ENCODE measurements at regions of chr4 and their contacts with region 1.

Region 1: GRCh38 chr4:53702334-53703266 is 111.3 kb upstream of the LNX1 start:
- DNase-seq: peak; percentile 62 to 75
- ATAC-seq: peak; percentile 56 to 68
- H3K4me3 ChIP-seq: peak overlapping the region; percentile 22 to 50 (median 42)
- H3K27ac ChIP-seq: peak overlapping the region; percentile 45 to 71 (median 58)
- H3K4me1 ChIP-seq: peaks cover 12 to 21% of the 10 kb centered on the region in 2 donors
- H3K27me3 ChIP-seq: no peaks in the 10 kb centered on the region
- CTCF ChIP-seq: no peak
- POLR2A ChIP-seq: no peak

Region 2: DNA sequence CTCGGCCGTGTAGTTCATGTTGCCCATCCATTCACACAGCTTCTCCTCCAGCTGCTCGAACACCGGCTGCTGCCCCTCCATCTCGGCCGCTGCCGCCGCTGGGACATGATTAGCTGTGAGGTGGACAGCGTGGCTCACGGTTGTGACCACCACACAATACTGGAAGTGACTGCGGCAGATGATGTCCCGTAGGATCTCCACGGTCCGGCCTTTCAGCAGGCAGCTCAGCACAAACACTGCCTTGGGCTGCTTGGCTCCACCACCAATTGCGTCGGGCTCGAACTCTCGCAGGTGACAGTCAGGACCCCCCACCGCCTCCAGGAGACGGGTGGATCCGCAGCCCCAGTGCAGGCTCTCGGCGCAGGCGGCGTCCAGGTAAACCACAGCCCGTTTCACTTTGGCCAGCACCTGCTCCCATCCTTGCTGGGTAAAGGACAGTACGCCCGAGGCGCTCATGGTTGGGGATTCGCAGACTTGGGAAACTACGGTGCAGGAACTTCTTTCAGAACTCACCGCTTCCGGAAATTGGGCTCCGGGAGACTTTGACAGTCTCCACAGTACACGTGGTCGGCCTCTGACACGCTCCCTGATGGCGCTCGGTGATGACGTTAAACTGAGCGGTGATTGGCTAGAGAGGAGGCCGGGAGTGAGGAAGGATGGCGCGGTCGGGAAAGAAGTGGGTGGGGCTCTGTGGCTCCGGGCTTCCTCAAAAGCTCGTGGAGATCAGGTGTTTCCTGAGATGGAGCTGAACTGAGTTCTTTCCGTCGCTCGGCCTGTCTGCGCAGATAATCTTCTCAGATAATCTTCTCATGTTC is 336.9 kb before region 1 on chr4 and contains the start of gene SCFD2:
- in situ Hi-C with region 1: no loop called
- intact Hi-C with region 1: no loop called
- DNase-seq: peak; percentile 96
- ATAC-seq: peak; percentile 100
- H3K4me3 ChIP-seq: peak within 1 kb of the TSS; percentile 64 to 98 (median 88)
- H3K27ac ChIP-seq: peak within 1 kb of the TSS; percentile 56 to 78 (median 68)
- H3K4me1 ChIP-seq: peaks cover 16 to 23% of the 10 kb centered on the region in 2 donors
- H3K27me3 ChIP-seq: peaks cover 2 to 13% (median 5%) of the 10 kb centered on the region in 3 donors
- CTCF ChIP-seq: no peak
- POLR2A ChIP-seq: peak; percentile 22 to 51
- total RNA-seq, gene SCFD2: 8.9 to 16.0 (median 14.8) TPM

Region 3: GRCh38 chr4:53490965-53491622 is 211.5 kb before region 1 on chr4:
- in situ Hi-C with region 1: no loop called
- intact Hi-C with region 1: loop called (anchors 10 kb)
- DNase-seq: peak in 1 of 2 donors; percentile 48
- ATAC-seq: peak; percentile 68 to 81
- H3K4me3 ChIP-seq: no peak overlapping the region
- H3K27ac ChIP-seq: peak overlapping the region in 1 of 4 donors; percentile 3
- H3K4me1 ChIP-seq: peaks cover 5 to 11% of the 10 kb centered on the region in 2 donors
- H3K27me3 ChIP-seq: no peaks in the 10 kb centered on the region
- CTCF ChIP-seq: peak; percentile 30 to 62 (median 50)
- POLR2A ChIP-seq: no peak

Region 4: DNA sequence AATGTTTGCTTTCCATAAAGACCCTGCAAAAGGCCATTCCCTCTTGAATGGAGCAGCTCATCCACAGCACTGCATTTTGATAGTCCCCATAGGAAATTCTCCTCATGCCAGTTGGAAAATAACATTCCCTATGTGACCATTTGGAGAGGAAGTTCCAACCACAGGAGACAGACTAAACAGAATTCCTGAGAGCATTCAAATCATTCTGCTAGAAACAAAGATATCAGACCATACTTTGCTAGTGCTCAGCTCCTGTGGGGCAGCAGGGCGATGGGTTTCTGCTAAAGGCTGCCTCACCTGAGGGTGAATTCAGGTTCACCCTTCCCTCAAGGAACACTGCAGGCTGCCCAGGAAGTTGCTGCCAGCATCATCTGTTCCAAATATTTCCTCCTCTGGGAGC is 170.1 kb before region 1 on chr4:
- in situ Hi-C with region 1: no loop called
- intact Hi-C with region 1: no loop called
- DNase-seq: no peak
- ATAC-seq: no peak
- H3K4me3 ChIP-seq: no peak overlapping the region
- H3K27ac ChIP-seq: peak overlapping the region in 2 of 4 donors; percentile 2 to 8
- H3K4me1 ChIP-seq: peaks cover 3% of the 10 kb centered on the region in 2 donors
- H3K27me3 ChIP-seq: no peaks in the 10 kb centered on the region
- CTCF ChIP-seq: no peak
- POLR2A ChIP-seq: no peak

Region 5: GRCh38 chr4:53551958-53552357 is 150.6 kb before region 1 on chr4:
- in situ Hi-C with region 1: no loop called
- intact Hi-C with region 1: no loop called
- DNase-seq: no peak
- ATAC-seq: no peak
- H3K4me3 ChIP-seq: no peak overlapping the region
- H3K27ac ChIP-seq: no peak overlapping the region
- H3K4me1 ChIP-seq: no peaks in the 10 kb centered on the region
- H3K27me3 ChIP-seq: no peaks in the 10 kb centered on the region
- CTCF ChIP-seq: no peak
- POLR2A ChIP-seq: no peak

Region 6: DNA sequence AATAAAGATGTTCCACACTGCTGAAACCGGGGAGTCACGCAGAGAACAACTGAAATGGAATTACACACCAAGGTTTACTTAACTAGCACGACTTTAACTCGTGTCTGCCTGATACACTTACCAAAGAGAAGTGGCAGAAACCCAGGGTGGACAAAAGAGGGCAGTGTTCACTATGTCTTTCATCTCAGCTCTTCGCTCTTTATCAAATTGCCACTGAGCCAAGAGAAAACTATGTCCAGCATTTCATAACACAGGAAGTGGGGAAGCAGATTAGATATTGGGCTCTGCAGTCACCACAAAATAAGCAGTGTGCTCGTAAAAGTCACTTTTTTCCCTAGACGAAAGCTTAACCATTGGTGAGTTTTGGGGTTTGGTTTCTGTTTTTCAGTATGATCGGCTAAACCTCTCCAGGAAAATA is 206.1 kb after region 1 on chr4:
- in situ Hi-C with region 1: no loop called
- intact Hi-C with region 1: loop called (anchors 10 kb)
- DNase-seq: peak; percentile 10 to 25
- ATAC-seq: peak; percentile 86 to 96
- H3K4me3 ChIP-seq: peak overlapping the region in 1 of 4 donors; percentile 22
- H3K27ac ChIP-seq: peak overlapping the region in 1 of 4 donors; percentile 14
- H3K4me1 ChIP-seq: peaks cover 16% of the 10 kb centered on the region in 2 donors
- H3K27me3 ChIP-seq: no peaks in the 10 kb centered on the region
- CTCF ChIP-seq: peak; percentile 20 to 64 (median 53)
- POLR2A ChIP-seq: no peak

Region 7: GRCh38 chr4:53987761-53988171 is 285.2 kb after region 1 on chr4:
- in situ Hi-C with region 1: no loop called
- intact Hi-C with region 1: no loop called
- DNase-seq: no peak
- ATAC-seq: no peak
- H3K4me3 ChIP-seq: no peak overlapping the region
- H3K27ac ChIP-seq: no peak overlapping the region
- H3K4me1 ChIP-seq: no peaks in the 10 kb centered on the region
- H3K27me3 ChIP-seq: no peaks in the 10 kb centered on the region
- CTCF ChIP-seq: no peak
- POLR2A ChIP-seq: no peak

Measured in gastrocnemius medialis (tissue), 4 donors.